ENCODE measurements at regions of chr11 and their contacts with region 1.

Region 1: DNA sequence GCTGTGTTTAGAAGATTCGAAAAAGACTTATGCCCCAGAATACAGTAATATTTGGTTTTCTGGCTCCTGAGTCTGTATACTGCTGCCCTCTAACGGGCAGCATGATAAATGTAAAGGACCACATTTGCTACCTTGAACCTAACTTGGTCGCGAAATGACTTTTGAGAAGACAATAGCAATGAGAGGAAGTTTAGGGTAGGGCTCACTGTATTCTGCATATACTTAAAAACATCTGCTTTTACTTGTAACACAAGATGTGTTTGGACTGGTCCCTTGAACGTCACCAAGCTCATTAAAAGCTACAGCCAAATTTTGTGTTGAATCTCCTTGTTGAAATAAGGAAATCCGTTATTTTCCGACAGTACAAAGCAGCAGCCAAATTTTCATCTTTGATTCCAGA is 309.1 kb downstream of the SWAP70 start:
- DNase-seq: peak; percentile 43
- H3K4me3 Mint-ChIP-seq: no peak overlapping the region
- H3K27ac Mint-ChIP-seq: no peak overlapping the region
- H3K4me1 Mint-ChIP-seq: no peaks in the 10 kb centered on the region
- H3K27me3 Mint-ChIP-seq: no peaks in the 10 kb centered on the region

Region 2: DNA sequence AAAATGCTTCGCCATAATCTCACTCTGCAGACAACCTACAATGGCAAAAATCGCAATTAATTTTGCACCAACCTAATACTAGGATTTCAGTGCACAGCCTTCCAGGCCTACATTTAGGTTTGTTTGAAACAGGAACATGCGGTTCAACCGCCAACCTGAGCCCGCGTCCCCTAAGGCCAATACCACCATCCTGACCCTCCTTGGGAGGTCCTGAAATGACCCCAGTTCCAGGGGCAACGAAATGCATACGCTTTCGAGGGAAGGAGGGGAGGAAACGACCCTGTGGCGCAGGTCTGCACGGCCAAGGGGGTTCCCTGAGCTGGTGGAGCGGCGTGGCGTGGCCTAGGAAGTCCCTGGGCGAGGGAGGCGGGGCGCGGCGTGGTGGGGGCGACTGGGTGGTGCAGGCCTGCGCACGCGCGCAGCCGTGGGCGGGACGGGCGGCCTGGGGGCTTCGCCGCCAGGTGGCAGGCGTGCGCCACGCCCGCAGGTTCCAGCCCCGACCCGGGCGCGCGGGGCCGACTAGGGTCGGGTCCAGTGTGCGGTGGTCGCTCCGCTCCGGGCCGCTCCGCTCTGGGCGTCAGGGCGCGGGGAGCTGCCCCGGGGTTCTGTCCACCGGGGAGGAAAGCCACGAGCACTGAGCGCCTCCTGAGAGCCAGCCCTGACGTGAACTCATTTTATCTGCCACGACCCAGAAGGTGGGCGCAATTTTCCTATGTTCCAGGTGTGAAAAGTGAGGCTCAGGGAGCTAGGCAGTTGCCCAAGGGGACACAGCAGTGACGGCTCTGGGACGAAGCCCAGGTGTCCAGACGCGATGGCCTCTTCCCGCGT is 215.0 kb before region 1 on chr11:
- CTCF ChIA-PET with region 1: interaction called, 37 read pairs
- DNase-seq: peak; percentile 94
- H3K4me3 Mint-ChIP-seq: peak overlapping the region; percentile 72
- H3K27ac Mint-ChIP-seq: peak overlapping the region; percentile 79
- H3K4me1 Mint-ChIP-seq: peaks cover 38% of the 10 kb centered on the region
- H3K27me3 Mint-ChIP-seq: no peaks in the 10 kb centered on the region

Region 3: GRCh38 chr11:9861860-9862725 is 110.9 kb before region 1 on chr11:
- CTCF ChIA-PET with region 1: interaction called, 10 read pairs
- DNase-seq: peak; percentile 54
- H3K4me3 Mint-ChIP-seq: no peak overlapping the region
- H3K27ac Mint-ChIP-seq: no peak overlapping the region
- H3K4me1 Mint-ChIP-seq: peaks cover 40% of the 10 kb centered on the region
- H3K27me3 Mint-ChIP-seq: no peaks in the 10 kb centered on the region

Region 4: DNA sequence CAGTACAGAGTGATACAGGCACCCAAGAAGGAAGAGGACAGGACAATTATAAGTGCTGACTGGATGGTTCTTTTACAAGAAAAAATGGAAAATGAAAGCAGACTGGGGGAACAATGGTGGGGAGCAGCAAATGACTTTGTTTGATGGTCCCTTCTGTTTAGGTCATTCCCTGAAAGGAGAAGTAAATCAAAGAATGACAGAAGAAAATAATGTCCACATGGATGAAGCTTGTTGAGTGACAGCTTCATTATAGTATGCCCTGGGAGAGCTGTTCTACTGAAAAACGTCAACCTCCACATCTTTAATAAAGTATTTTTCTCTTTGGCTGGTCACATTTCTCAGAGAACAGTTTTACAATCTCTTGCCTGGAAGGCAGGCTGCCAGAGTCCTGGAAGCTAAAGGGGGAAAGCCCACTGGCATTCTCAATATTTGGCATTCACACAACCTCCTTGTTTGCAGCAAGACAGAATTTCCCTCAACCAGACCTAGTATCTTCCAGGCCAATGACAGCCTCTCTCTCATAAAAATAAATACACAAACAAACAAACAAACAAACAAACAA is 21.2 kb before region 1 on chr11:
- CTCF ChIA-PET with region 1: no interaction called
- DNase-seq: no peak
- H3K4me3 Mint-ChIP-seq: no peak overlapping the region
- H3K27ac Mint-ChIP-seq: no peak overlapping the region
- H3K4me1 Mint-ChIP-seq: no peaks in the 10 kb centered on the region
- H3K27me3 Mint-ChIP-seq: no peaks in the 10 kb centered on the region

Region 5: DNA sequence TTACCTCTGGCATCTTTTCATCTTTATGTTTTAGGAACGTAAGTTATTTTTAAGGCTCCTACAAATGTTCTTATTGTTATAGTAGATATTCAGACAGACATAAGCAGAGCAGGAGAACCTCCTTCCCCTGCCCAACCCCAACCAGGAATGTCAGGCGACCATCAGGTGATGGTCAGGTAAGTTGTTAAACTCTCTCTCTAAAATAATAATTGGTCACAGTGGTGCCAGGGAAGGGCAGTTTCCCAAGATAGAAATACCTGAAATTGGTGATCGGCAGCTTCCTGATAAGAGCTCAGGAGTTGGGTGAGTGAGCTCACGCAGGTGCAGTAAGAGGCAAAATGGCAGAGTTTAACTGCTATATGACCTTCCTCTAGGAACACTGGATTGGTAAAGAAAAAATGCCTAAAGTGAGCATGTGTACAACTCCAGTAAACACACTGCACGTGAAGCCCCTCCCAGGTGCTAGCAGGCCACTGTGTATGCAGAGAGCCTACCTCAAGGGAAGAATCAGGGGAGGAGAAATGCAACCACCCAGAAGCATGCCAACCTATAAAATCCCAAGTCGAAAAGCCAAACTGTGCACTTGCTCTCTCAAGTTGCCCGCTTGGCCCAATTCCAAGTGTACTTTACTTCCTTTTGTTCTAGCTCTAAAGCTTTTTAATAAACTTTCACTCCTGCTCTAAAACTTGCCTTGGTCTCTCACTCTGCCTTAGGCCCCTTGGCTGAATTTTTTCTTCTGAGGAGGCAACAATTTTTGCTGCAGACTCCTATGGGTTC is 47.1 kb after region 1 on chr11:
- CTCF ChIA-PET with region 1: no interaction called
- DNase-seq: no peak
- H3K4me3 Mint-ChIP-seq: no peak overlapping the region
- H3K27ac Mint-ChIP-seq: no peak overlapping the region
- H3K4me1 Mint-ChIP-seq: peaks cover 12% of the 10 kb centered on the region
- H3K27me3 Mint-ChIP-seq: no peaks in the 10 kb centered on the region

Measured in activated naive CD4-positive, alpha-beta T cell treated with anti-CD3 and anti-CD28 coated beads, Interleukin-2, amount 10 ng/mL, durations not matched to agents 7 days and 5 days (primary cell).